ENCODE measurements at regions of chr2 and their contacts with region 1.

Region 1: DNA sequence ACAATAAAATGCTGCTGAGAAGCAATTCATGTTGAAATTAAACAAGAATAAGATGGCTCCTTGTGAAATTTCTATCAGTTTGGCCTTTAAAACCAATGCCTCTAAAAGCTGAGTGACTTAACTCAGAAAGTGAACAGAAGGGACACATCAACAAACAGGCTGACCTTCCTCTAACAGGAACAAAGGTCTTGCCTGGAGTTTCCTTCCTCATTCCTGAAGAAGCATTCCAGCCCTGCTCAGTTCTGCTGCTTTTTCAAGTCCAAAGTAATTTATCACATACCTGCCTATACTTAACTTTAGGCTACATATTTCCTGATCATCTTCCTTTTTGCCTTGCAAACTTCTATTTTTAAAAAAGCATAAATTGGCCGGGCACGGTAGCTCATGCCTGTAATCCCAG is 14.1 kb downstream of the PTRHD1 start:
- DNase-seq: no peak
- H3K27ac ChIP-seq: no peak overlapping the region
- CTCF ChIP-seq: no peak

Region 2: GRCh38 chr2:24792874-24793760 is 14.0 kb after region 1 on chr2 and contains the starts of genes CENPO and PTRHD1:
- CTCF ChIA-PET with region 1: interaction called, 13 read pairs
- POLR2A ChIA-PET with region 1: no interaction called
- DNase-seq: peak; percentile 96
- H3K27ac ChIP-seq: peak within 1 kb of the TSS; percentile 94
- CTCF ChIP-seq: peak; percentile 74